AG04449 (cell line): ENCODE measurements at regions of chr5 and their contacts with region 1.

Region 1: GRCh38 chr5:148957591-148958202 is 105.2 kb downstream of the SH3TC2 start:
- DNase-seq: no peak
- H3K4me3 ChIP-seq: no peak overlapping the region
- CTCF ChIP-seq: peak; percentile 63

Region 2: DNA sequence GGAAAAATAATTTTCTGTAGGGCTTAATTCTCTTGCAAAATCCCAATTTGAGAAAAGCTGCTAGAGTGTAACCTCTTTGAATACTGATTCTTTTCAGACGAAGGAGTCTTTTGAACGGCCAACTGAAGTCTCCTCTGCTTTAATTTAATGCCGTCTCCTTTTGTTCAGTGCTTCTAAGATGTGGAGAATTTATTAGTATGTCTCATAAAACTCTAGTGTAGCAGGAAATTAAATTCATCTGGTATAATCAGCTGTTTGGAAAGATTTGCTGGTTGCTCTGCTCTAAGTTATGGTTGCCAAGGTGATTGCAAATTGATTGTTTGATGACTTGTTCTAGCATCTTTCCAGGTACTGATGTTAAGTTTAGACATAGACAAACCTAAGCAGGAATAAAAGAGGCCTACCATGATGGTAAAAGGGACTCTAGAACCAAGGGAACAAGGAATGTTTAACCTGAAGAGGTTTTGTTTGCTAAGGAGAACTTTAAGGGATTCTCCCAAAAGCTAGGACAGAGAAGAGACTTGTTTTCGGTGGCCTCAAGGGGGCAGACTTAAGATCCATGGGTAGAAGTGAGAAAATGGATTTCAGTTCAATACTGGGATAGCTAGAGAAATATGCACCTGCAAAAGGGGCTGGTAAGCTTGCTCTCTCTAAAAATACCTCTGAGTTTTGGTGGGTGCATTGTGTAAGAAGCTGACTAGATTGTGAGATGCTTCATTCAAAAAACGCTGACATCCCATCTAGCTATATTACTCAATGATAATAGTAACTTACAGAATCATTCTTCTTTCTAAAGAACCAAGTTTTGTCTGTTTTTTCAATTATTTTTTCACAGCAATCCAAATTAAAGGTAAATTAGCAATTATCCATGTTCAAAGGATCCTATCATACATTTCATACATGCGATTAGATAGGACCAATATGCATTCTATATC is 137.0 kb before region 1 on chr5:
- CTCF ChIA-PET with region 1: interaction called, 38 read pairs
- POLR2A ChIA-PET with region 1: no interaction called
- DNase-seq: no peak
- H3K4me3 ChIP-seq: no peak overlapping the region
- CTCF ChIP-seq: peak; percentile 53

Region 3: GRCh38 chr5:148928141-148928540 is 29.6 kb before region 1 on chr5:
- CTCF ChIA-PET with region 1: interaction called, 13 read pairs
- POLR2A ChIA-PET with region 1: no interaction called
- DNase-seq: no peak
- H3K4me3 ChIP-seq: no peak overlapping the region
- CTCF ChIP-seq: no peak

Region 4: GRCh38 chr5:148970228-148970627 is 12.5 kb after region 1 on chr5:
- CTCF ChIA-PET with region 1: interaction called, 56 read pairs
- POLR2A ChIA-PET with region 1: no interaction called
- DNase-seq: no peak
- H3K4me3 ChIP-seq: no peak overlapping the region
- CTCF ChIP-seq: no peak

Region 5: DNA sequence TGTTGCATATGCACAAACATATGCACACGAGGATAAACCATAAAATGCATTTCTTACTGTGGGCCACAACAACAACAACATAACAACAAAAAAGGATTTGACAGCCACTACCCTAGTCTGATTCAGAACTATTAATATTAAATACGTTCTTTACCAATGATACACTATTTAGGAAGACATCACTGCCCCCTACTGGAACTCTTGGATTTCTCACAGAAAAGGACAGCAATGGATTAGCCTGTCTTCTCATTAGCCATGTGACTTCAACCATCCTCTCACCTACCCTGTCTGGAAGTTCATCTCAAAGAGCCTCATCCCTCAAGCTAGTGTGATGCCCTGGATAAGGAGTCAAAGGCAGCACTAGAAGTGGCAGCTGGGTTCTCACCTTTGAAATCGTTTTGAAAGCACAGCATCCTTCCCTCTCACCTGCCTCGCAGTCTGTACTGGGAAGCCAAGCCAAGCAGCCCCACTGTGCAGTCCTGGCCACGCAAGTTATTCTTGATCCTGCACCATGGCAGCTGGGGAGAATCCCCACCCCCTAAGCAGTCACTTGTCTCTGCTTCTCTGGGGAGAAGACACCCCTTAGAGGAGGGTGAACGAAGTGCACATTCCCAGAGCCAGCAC is 40.6 kb after region 1 on chr5:
- CTCF ChIA-PET with region 1: interaction called, 18 read pairs
- POLR2A ChIA-PET with region 1: no interaction called
- DNase-seq: no peak
- H3K4me3 ChIP-seq: no peak overlapping the region
- CTCF ChIP-seq: peak; percentile 57

Region 6: DNA sequence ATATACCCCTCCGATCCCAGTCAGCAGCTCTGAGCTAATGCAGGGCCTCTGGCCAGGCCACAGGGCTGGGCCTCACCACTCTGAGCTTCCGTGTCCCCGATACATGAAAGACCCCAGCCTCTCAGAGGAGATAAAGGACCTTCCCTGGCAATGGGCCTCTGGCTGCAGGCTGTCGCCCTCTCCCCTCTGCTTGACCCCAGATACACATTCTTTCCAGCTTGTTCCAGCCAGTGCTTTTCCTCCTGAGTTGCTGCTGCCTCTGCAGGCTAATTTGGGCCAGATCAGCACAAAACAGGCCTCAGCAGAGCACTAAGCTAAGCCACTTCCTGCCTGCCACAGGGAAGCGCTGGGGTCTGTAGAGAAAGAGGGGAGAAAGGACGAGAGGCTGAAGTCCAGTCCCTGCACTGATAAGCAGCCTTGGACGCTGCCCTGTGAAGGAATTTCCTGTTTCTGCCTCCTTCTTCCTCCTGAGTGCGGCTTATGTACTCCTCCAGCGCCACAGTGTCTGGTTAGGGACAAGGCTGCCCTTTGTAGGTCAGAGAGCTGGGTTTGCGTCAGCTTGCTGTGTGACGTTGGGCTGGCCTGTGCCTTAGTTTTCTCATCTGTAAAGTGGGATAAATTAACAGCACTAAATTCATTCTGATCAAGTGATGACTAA is 494.4 kb after region 1 on chr5:
- CTCF ChIA-PET with region 1: no interaction called
- POLR2A ChIA-PET with region 1: no interaction called
- DNase-seq: no peak
- H3K4me3 ChIP-seq: no peak overlapping the region
- CTCF ChIP-seq: no peak